ENCODE measurements at regions of chr1 and their contacts with region 1.

Region 1: GRCh38 chr1:10986525-10986890 is 25.9 kb upstream of the TARDBP start:
- DNase-seq: peak; percentile 61
- ATAC-seq: peak; percentile 64
- H3K4me3 ChIP-seq: peak overlapping the region; percentile 2; the same call in 1 of the 2 replicates
- H3K27ac ChIP-seq: peak overlapping the region; percentile 92
- H3K4me1 ChIP-seq: peaks cover 39% of the 10 kb centered on the region
- H3K27me3 ChIP-seq: no peaks in the 10 kb centered on the region
- CTCF ChIP-seq: no peak
- EP300 ChIP-seq: peak in 1 of 2 experiments; percentile 52; a peak in 1 of 4 replicates
- POLR2A ChIP-seq: no peak
- RAD21 ChIP-seq: no peak

Region 2: GRCh38 chr1:10714337-10715114 is 272.0 kb before region 1 on chr1:
- CTCF ChIA-PET with region 1: no interaction called
- POLR2A ChIA-PET with region 1: no interaction called
- RAD21 ChIA-PET with region 1: no interaction called
- SMC1A ChIA-PET with region 1: no interaction called
- in situ Hi-C with region 1: no loop called
- intact Hi-C with region 1: no loop called
- DNase-seq: no peak
- ATAC-seq: no peak
- H3K4me3 ChIP-seq: no peak overlapping the region
- H3K27ac ChIP-seq: no peak overlapping the region
- H3K4me1 ChIP-seq: no peaks in the 10 kb centered on the region
- H3K27me3 ChIP-seq: peaks cover 0 to 3% of the 10 kb centered on the region in 2 experiments; a peak in 2 of 4 replicates
- CTCF ChIP-seq: no peak
- EP300 ChIP-seq: no peak
- POLR2A ChIP-seq: no peak
- RAD21 ChIP-seq: no peak

Region 3: DNA sequence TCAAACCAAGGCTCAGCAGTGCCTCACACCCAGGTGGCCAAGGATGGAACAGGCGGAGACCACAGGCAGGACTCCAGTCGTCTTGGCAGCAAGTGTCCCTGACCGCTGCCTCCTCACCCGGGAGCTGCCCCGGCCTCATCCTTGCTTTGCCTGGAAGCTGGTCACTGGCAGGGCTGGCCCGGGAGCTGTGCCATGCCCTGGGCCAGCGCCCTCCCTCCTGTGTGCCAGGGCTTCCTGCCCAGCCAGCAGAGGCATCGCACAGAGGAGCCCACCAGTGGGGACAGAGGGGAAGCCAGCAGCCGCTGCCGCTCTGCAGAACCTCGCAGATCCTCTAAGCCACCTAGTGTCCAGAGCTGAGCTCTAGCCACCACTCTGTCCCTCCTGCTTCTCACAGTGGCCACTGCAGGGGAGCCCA is 197.9 kb before region 1 on chr1:
- CTCF ChIA-PET with region 1: no interaction called
- POLR2A ChIA-PET with region 1: no interaction called
- RAD21 ChIA-PET with region 1: no interaction called
- SMC1A ChIA-PET with region 1: no interaction called
- in situ Hi-C with region 1: no loop called
- intact Hi-C with region 1: no loop called
- DNase-seq: no peak
- ATAC-seq: no peak
- H3K4me3 ChIP-seq: no peak overlapping the region
- H3K27ac ChIP-seq: no peak overlapping the region
- H3K4me1 ChIP-seq: no peaks in the 10 kb centered on the region
- H3K27me3 ChIP-seq: peaks cover 0 to 4% of the 10 kb centered on the region in 2 experiments; a peak in 3 of 4 replicates
- CTCF ChIP-seq: no peak
- EP300 ChIP-seq: no peak
- POLR2A ChIP-seq: no peak
- RAD21 ChIP-seq: no peak

Region 4: GRCh38 chr1:10960411-10961299 is 25.9 kb before region 1 on chr1:
- CTCF ChIA-PET with region 1: interaction called, 40 read pairs
- POLR2A ChIA-PET with region 1: interaction called, 41 read pairs
- RAD21 ChIA-PET with region 1: interaction called, 89 read pairs
- SMC1A ChIA-PET with region 1: interaction called, 118 read pairs
- in situ Hi-C with region 1: no loop called
- intact Hi-C with region 1: loop called (anchors 1 kb)
- DNase-seq: no peak
- ATAC-seq: peak; percentile 73
- H3K4me3 ChIP-seq: no peak overlapping the region
- H3K27ac ChIP-seq: no peak overlapping the region
- H3K4me1 ChIP-seq: peaks cover 31% of the 10 kb centered on the region
- H3K27me3 ChIP-seq: no peaks in the 10 kb centered on the region; a peak in 1 of 4 replicates
- CTCF ChIP-seq: peak; percentile 76 to 96 (median 94)
- EP300 ChIP-seq: no peak
- POLR2A ChIP-seq: no peak
- RAD21 ChIP-seq: peak; percentile 64

Region 5: DNA sequence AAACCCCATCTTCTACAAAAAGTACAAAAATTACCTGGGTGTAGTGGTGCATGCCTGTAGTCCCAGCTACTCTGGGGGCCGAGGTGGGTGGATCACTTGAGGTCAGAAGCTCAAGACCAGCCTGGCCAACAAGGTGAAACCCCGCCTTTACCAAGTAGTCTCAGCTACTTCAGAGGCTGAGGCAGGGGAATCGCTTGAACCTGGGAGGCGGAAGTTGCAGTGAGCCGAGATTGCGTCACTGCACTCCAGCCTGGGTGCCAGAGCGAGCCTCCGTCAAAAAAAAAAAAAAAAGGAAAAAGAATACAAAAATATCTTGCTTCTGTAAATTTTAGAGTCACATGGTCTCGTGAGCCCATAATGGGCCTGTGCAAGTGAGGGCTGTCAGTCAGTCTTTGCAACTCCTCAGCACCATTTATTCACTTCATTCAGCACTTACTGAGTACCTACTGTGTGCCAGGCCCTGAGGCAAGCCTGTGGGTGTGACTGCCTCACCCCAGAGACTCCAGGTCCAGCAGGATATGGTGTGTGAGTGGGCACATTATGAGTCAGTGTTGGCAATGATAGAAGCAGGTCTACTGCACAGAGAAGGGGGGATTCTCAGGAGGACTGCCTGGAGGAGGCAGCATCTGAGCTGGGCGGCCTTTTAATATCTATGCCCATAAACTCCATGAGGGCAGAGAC is 20.8 kb before region 1 on chr1:
- CTCF ChIA-PET with region 1: interaction called, 40 read pairs
- POLR2A ChIA-PET with region 1: interaction called, 41 read pairs
- RAD21 ChIA-PET with region 1: interaction called, 89 read pairs
- SMC1A ChIA-PET with region 1: interaction called, 118 read pairs
- in situ Hi-C with region 1: no loop called
- intact Hi-C with region 1: loop called (anchors 1 kb)
- DNase-seq: peak; percentile 58
- ATAC-seq: peak; percentile 81
- H3K4me3 ChIP-seq: 0 out of 2 replicates have a peak overlapping the region, but pooled peaks have one; percentile 25
- H3K27ac ChIP-seq: peak overlapping the region; percentile 77
- H3K4me1 ChIP-seq: peaks cover 69% of the 10 kb centered on the region
- H3K27me3 ChIP-seq: no peaks in the 10 kb centered on the region
- CTCF ChIP-seq: no peak
- EP300 ChIP-seq: no peak; a peak in 1 of 4 replicates
- POLR2A ChIP-seq: no peak
- RAD21 ChIP-seq: no peak

Region 6: DNA sequence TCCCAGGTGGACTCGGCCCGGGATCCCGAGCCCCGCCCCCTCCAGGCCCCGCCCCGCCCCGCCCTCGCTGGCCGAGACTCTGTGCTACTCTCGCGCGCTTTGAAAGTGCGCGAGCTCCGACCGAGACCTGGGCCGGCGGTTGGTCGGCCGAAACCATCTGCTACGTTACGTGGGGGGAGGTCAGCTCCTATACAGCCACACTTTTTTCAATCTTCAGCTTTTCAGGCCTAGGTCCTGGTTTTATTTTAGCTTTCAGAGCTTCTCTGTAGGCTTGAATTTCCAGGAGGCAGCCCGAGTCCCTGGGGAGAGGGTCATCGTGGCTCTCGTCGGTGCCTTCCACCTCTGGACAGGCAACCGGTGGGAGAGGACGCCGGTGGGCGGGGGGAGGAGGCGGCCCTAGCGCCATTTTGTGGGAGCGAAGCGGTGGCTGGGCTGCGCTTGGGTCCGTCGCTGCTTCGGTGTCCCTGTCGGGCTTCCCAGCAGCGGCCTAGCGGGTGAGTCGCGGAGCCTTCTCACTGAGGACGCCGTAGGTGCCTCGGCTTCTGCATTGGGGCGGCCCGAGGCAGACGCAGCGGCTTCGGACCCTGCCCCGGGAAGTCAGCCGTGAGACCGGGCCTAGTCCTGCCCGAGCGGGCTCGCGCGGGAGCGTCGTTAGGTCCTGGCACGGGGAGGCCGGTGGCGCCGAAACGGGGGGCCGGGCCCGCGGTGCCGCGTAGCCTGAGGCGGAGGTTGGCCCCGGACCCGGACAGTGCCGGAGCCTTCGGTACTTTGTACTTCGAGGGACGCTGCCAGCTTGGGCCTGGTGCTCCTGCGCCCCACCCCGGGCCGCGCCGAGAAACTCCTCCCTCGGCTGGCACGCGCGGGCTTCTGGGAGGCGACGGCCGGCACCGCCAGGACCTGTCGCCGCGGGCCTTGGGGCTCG is 26.0 kb after region 1 on chr1 and contains the start of gene TARDBP:
- CTCF ChIA-PET with region 1: no interaction called
- POLR2A ChIA-PET with region 1: interaction called, 3 read pairs
- RAD21 ChIA-PET with region 1: interaction called, 17 read pairs
- SMC1A ChIA-PET with region 1: interaction called, 11 read pairs
- in situ Hi-C with region 1: no loop called
- intact Hi-C with region 1: loop called (anchors 1 kb)
- DNase-seq: peak; percentile 72
- ATAC-seq: peak; percentile 93
- H3K4me3 ChIP-seq: peak within 1 kb of the TSS; percentile 78
- H3K27ac ChIP-seq: peak within 1 kb of the TSS; percentile 100
- H3K4me1 ChIP-seq: peaks cover 5% of the 10 kb centered on the region; the same call in 1 of the 2 replicates
- H3K27me3 ChIP-seq: no peaks in the 10 kb centered on the region
- CTCF ChIP-seq: no peak
- EP300 ChIP-seq: peak in 1 of 2 experiments; percentile 11; a peak in 1 of 4 replicates
- POLR2A ChIP-seq: peak; percentile 98
- RAD21 ChIP-seq: no peak
- polyA plus RNA-seq, gene TARDBP: 76.1 to 171 TPM

Region 7: DNA sequence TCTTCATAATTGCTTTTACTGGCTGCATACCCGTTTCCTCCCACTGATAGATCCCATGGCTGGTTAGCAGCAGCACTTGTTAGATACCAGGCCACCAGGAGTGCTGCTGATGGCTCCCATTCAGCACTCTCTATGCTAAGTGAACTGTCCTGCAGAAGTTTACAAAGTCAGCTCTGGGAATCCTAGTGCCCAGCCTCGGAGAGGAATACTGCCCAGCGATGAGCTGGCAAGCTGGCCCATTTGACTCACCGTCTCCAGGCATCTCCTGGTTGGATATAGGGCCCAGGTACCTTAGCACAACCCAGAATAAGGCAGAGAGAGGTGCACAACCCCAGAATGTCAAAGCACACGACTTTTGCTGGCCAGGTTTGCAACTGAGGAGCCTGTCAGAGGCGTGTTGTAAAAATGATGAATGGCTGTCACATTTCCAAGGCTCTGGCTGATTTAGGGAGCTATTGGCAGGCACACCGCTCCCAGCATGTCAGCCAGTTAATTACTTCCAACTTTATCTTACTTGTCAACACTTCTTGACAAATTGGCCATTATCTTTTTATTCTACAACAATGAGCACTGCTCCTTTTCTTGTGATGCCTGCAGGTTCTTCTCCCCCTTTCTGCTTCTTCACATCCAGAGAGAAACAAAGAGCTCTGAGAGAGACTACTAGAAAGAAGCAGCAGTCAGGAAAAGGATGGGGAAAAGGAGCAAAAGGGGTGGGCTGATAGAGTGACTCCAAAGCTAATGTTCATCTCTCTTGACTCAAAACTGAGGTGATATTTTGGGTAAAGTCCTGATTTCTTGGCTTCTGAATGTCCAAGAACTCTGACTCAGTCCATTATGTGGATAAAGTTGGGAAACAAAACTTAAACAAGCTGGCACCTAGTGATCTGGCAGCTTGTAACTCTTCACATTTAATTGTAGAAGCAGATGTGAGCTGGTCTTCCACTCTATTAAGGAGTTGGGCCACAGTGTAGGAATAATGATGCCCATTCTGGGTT is 191.8 kb after region 1 on chr1:
- CTCF ChIA-PET with region 1: no interaction called
- POLR2A ChIA-PET with region 1: no interaction called
- RAD21 ChIA-PET with region 1: no interaction called
- SMC1A ChIA-PET with region 1: no interaction called
- in situ Hi-C with region 1: no loop called
- intact Hi-C with region 1: no loop called
- DNase-seq: no peak
- ATAC-seq: no peak
- H3K4me3 ChIP-seq: no peak overlapping the region
- H3K27ac ChIP-seq: no peak overlapping the region
- H3K4me1 ChIP-seq: no peaks in the 10 kb centered on the region
- H3K27me3 ChIP-seq: no peaks in the 10 kb centered on the region
- CTCF ChIP-seq: no peak
- EP300 ChIP-seq: no peak
- POLR2A ChIP-seq: no peak
- RAD21 ChIP-seq: no peak

Measured in GM12878 (cell line).